IMR-90 (cell line): ENCODE measurements at regions of chr2 and their contacts with region 1.

Region 1: DNA sequence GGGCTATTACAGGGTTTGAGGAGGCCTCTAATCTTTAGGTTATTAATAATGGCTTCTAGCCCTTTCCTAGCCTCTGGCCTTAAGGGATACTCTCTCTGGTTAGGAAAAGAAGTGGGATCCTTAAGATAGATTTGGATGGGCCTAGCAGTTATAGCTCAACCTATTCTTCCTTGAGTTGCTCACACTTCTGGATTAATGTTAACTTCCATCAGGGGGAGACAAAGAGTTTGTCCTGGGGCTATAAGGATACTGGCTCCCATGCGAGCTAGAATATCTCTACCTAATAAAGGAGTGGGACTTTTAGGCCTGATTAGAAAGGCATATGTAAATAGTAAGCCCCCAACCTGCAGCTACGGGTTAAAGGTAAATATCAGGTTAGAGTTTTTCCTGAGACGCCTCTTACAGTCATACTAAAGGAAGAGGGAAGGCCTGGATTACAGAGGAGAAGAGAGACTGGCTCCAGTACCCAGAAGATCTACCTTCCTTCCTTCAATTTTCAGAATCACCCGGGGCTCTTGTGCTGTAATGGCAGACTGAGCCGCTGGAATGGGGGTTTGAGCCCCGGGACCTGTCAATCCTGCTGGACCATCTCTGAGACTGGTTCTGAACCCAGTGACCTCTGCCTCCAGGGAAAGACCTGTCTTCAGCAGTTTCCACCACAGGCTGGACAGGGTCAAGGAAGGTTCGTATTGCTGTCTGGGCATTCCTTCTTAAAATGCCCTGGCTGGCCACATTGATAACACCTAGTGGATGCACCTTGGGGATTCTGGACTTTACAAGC is 14.1 kb upstream of the PTH2R start:
- DNase-seq: no peak
- ATAC-seq: no peak
- H3K4me3 ChIP-seq: no peak overlapping the region
- H3K27ac ChIP-seq: no peak overlapping the region
- H3K4me1 ChIP-seq: no peaks in the 10 kb centered on the region
- H3K27me3 ChIP-seq: no peaks in the 10 kb centered on the region
- CTCF ChIP-seq: peak; percentile 22
- POLR2A ChIP-seq: no peak
- RAD21 ChIP-seq: no peak

Region 2: GRCh38 chr2:208134928-208135586 is 257.4 kb before region 1 on chr2:
- CTCF ChIA-PET with region 1: no interaction called
- POLR2A ChIA-PET with region 1: no interaction called
- dilution Hi-C with region 1: no loop called
- in situ Hi-C with region 1: no loop called
- intact Hi-C with region 1: no loop called
- DNase-seq: no peak
- ATAC-seq: no peak
- H3K4me3 ChIP-seq: no peak overlapping the region
- H3K27ac ChIP-seq: no peak overlapping the region
- H3K4me1 ChIP-seq: no peaks in the 10 kb centered on the region
- H3K27me3 ChIP-seq: no peaks in the 10 kb centered on the region
- CTCF ChIP-seq: no peak
- POLR2A ChIP-seq: no peak
- RAD21 ChIP-seq: no peak

Region 3: DNA sequence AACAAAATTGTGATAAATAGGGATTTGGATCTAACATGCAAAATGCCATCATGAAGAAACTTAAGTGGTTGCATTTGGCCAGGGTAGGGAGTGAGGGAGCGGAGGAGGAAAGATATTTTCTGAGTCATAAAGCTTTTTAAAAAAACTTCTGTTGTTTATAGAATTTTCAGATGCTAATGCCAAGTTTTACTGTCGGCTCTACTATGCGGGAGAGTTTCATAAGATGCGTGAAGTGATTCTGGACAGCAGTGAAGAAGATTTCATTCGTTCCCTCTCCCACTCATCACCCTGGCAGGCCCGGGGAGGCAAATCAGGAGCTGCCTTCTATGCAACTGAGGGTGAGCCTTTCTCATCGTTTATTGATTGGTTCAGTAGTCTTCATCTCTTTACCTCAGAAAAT is 41.9 kb before region 1 on chr2:
- CTCF ChIA-PET with region 1: no interaction called
- POLR2A ChIA-PET with region 1: no interaction called
- dilution Hi-C with region 1: no loop called
- in situ Hi-C with region 1: no loop called
- intact Hi-C with region 1: no loop called
- DNase-seq: peak; percentile 89
- ATAC-seq: peak; percentile 91
- H3K4me3 ChIP-seq: no peak overlapping the region
- H3K27ac ChIP-seq: peak overlapping the region; percentile 1; the same call in 1 of the 2 replicates
- H3K4me1 ChIP-seq: no peaks in the 10 kb centered on the region
- H3K27me3 ChIP-seq: no peaks in the 10 kb centered on the region
- CTCF ChIP-seq: no peak
- POLR2A ChIP-seq: no peak
- RAD21 ChIP-seq: no peak

Region 4: DNA sequence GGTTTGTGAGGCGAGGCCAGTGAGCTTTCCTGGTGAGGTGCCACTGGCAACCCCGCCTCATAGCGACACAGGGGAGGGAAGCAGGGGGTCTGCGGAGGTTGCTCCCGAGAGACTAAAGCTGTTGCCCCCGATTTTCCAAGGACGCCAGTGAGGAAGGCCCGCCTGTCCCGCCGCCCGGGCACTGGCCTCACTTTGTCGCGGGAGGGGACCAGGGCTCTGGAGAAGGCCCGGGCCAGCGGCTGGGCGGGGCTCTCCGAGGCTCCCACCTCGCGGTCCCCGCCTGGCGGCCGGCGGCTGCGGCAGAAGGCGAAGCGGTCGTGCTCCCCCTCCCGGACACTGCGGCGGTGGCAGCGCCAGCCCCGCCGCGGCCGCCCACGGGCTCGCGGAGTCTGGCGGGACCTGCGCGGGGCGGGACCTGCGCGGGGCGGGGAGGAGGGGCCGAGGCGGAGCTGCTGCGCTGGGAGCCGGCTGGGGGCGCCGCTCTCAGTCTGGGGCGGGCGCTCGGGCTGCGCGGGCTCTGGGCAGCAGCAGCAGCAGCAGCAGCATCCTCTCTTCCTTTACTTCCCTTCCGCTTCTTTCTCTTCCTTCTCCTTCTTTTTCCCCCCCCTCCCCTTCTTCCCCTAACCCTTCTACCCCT is 1031.2 kb after region 1 on chr2 and contains the start of gene MAP2:
- CTCF ChIA-PET with region 1: interaction called, 3 read pairs
- POLR2A ChIA-PET with region 1: no interaction called
- dilution Hi-C with region 1: no loop called
- in situ Hi-C with region 1: no loop called
- intact Hi-C with region 1: loop called (anchors 1 kb)
- DNase-seq: peak; percentile 60
- ATAC-seq: peak; percentile 99
- H3K4me3 ChIP-seq: peak within 1 kb of the TSS; percentile 43
- H3K27ac ChIP-seq: no peak within 1 kb of the TSS
- H3K4me1 ChIP-seq: peaks cover 3% of the 10 kb centered on the region; the same call in 1 of the 2 replicates
- H3K27me3 ChIP-seq: no peaks in the 10 kb centered on the region
- CTCF ChIP-seq: peak; percentile 99
- POLR2A ChIP-seq: no peak
- RAD21 ChIP-seq: peak; percentile 58
- total RNA-seq, gene MAP2: 0.28 and 0.36 TPM in 2 replicates

Region 5: DNA sequence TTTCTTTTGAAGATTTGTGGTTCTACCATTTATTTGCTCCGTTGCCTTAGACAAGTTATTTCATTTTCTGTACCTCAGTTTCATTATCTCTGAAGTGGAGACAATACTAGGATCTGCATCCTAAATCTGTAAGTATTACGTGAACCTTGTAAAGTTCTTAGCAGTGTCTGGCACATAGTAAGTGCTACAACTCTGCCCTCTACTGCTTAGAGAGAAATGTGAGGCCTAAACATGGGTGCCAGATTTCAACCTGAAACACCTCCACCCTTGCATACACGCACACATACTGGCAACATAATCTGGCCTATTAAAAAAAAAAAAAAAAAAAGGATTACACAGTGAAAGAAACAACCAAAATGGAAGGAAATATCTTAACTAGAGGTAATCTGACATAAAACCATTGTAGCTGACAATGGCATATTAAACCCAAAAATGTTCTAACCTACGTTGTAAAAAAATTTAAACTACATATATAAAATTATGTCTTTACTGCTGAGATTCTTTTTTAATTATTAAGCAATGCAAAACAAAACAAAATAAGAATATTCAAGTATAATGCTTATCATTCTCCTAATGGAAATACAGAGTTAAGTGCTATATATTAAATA is 1164.0 kb after region 1 on chr2:
- CTCF ChIA-PET with region 1: no interaction called
- POLR2A ChIA-PET with region 1: no interaction called
- dilution Hi-C with region 1: no loop called
- in situ Hi-C with region 1: loop called (anchors 25 kb)
- intact Hi-C with region 1: no loop called
- DNase-seq: peak; percentile 59
- ATAC-seq: peak; percentile 61
- H3K4me3 ChIP-seq: no peak overlapping the region
- H3K27ac ChIP-seq: no peak overlapping the region
- H3K4me1 ChIP-seq: no peaks in the 10 kb centered on the region
- H3K27me3 ChIP-seq: no peaks in the 10 kb centered on the region
- CTCF ChIP-seq: peak; percentile 67
- POLR2A ChIP-seq: no peak
- RAD21 ChIP-seq: peak; percentile 78

Region 6: GRCh38 chr2:209577376-209578357 is 1185.2 kb after region 1 on chr2:
- CTCF ChIA-PET with region 1: interaction called, 3 read pairs
- POLR2A ChIA-PET with region 1: no interaction called
- dilution Hi-C with region 1: no loop called
- in situ Hi-C with region 1: loop called (anchors 25 kb)
- intact Hi-C with region 1: loop called (anchors 2 kb)
- DNase-seq: peak; percentile 6
- ATAC-seq: no peak
- H3K4me3 ChIP-seq: no peak overlapping the region
- H3K27ac ChIP-seq: no peak overlapping the region
- H3K4me1 ChIP-seq: no peaks in the 10 kb centered on the region
- H3K27me3 ChIP-seq: no peaks in the 10 kb centered on the region
- CTCF ChIP-seq: peak; percentile 52
- POLR2A ChIP-seq: no peak
- RAD21 ChIP-seq: peak; percentile 27; the same call in 1 of the 2 replicates